Ascending aorta (tissue), 2 donors: ENCODE measurements at regions of chr4 and their contacts with region 1.

Region 1: DNA sequence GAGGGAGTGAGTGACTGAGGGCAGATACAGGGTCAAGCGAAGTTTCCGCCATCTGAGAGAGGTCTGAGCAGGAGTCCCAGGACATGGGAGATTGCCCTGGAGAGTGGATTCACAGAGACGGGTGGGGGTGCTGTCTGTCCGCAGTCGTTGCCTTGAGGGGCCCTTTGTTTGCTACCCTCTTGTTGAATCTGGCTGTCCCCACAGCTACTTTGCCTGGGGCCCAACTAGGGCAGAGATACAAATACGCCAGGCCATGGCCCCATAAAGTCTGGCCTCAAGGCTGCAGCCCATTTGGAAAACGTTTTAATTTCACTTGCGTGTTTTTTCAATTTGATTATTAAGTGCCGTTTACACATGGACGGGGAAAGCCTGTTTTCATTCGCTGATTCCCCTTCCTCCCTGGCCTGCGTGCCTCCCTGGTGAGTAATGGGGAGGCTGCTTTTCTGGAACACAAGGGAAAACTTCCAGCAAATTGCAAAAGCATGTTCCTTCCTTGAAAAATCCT is 134.4 kb downstream of the SMIM20 start:
- DNase-seq: peak in 1 of 2 donors; percentile 90
- H3K4me3 ChIP-seq: peak overlapping the region; percentile 12 to 35
- H3K27ac ChIP-seq: peak overlapping the region; percentile 87 to 93
- H3K4me1 ChIP-seq: peaks cover 10 to 22% of the 10 kb centered on the region in 2 donors
- H3K27me3 ChIP-seq: no peaks in the 10 kb centered on the region
- CTCF ChIP-seq: no peak

Region 2: DNA sequence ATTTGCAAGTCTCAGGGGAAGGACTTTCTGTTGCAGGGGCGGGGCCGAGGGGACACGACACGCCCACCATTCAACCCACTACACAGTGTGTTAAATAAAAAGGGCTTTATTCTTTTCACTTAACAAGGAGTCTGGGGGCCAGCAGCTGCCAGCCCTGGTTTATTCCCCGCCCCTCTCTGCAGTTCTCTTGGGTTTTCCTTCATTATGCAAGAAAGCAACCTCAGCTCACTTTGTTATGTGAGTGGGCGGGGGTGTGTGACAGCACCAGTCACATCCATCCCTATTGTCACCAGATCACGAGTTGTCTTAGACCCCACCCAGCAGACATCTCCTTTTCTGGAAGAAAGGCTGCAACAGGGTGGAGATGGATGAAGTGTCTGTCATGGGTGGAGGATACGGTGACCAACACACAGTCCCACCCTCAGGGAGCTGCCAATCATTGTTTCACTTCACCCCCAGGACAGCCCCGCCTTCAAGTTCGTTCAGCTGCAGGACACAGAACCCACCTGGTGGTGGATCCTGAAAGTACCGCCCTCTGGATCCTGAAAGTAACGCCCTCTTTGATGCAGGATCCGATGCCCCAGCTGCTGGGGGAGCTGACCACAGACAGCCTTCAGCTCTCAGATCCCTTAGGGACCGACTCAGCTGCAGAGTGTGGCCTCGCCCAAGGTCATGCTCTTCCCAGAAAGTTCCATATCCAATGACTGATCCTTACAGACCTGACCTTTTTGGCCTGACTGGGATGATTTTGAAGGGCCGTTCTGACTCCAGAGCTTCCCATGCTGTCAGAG is 54.8 kb before region 1 on chr4:
- intact Hi-C with region 1: loop called (anchors 1 kb)
- DNase-seq: peak in 1 of 2 donors; percentile 62
- H3K4me3 ChIP-seq: no peak overlapping the region
- H3K27ac ChIP-seq: no peak overlapping the region
- H3K4me1 ChIP-seq: peaks cover 0 to 3% of the 10 kb centered on the region in 2 donors
- H3K27me3 ChIP-seq: no peaks in the 10 kb centered on the region
- CTCF ChIP-seq: no peak

Region 3: DNA sequence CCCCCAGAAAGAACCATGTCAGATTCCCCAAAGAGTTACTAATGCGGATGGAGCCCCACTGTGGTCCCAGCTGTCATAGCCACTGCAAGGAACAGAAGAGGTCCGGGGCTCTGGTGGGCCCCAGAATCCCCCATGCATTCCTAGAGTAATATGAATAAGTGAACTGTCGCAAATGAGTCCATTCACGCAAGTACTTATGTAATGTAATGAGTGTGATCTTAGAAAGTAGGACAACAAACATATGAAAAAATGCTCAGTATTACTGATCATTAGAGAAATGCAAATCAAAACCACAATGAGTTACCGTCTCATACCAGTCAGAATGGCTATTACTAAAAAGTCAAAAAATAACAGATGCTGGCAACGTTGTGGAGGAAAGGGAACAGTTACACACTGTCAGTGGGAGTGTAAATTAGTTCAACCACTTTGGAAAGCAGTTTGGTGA is 130.9 kb after region 1 on chr4:
- intact Hi-C with region 1: no loop called
- DNase-seq: no peak
- H3K4me3 ChIP-seq: no peak overlapping the region
- H3K27ac ChIP-seq: no peak overlapping the region
- H3K4me1 ChIP-seq: no peaks in the 10 kb centered on the region
- H3K27me3 ChIP-seq: no peaks in the 10 kb centered on the region
- CTCF ChIP-seq: no peak